Activated CD4-positive, alpha-beta memory T cell treated with anti-CD3 and anti-CD28 coated beads for 36 hours (primary cell): ENCODE measurements at regions of chr2 and their contacts with region 1.

Region 1: GRCh38 chr2:134163336-134163735 is 90.5 kb upstream of the MGAT5 start:
- DNase-seq: no peak
- H3K4me3 Mint-ChIP-seq: no peak overlapping the region
- H3K27ac Mint-ChIP-seq: no peak overlapping the region
- H3K4me1 Mint-ChIP-seq: peaks cover 78% of the 10 kb centered on the region
- H3K27me3 Mint-ChIP-seq: no peaks in the 10 kb centered on the region

Region 2: DNA sequence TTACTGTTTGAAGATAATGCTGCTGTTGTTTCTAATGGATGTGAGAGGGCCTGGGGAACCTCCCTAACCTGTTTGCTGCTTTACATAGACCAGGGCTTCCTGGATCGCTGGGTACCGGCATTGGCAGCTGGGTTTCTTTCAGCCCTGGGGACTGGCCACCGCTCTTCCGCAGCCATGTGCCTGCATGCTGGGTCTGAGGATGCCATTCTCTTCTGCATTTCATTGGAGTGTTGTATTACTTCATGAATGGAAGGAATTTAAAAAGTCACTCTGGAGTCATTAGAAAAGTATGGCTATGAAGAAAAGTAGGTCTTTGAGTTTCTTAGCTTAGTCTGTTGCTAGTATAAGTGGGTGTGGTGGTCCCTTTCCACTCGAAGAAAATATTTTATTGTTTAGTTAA is 16.7 kb before region 1 on chr2:
- CTCF ChIA-PET with region 1: interaction called, 3 read pairs
- POLR2A ChIA-PET with region 1: no interaction called
- intact Hi-C with region 1: loop called (anchors 2 kb)
- DNase-seq: no peak
- H3K4me3 Mint-ChIP-seq: no peak overlapping the region
- H3K27ac Mint-ChIP-seq: no peak overlapping the region
- H3K4me1 Mint-ChIP-seq: peaks cover 64% of the 10 kb centered on the region
- H3K27me3 Mint-ChIP-seq: no peaks in the 10 kb centered on the region

Region 3: DNA sequence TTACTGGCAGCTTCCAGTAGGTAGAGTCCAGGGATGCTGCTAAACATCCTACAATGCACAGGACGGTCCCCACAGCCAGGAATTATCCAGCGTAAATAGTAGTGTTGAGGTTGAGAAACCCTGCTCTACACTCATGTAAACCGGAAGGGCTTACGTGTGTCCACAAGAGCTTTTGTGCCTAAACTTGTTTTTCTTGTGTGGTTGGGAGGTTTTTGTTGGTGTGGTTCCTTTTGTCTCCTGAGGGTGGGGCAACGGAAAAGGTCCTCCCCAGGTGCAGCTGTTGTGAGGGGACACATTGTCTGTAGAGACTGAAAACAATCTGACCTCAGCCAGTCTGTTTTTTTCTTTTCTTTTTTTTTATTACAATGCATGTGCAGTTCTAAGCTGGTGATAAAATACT is 17.9 kb after region 1 on chr2:
- CTCF ChIA-PET with region 1: no interaction called
- POLR2A ChIA-PET with region 1: no interaction called
- intact Hi-C with region 1: no loop called
- DNase-seq: peak; percentile 51
- H3K4me3 Mint-ChIP-seq: no peak overlapping the region
- H3K27ac Mint-ChIP-seq: peak overlapping the region; percentile 47
- H3K4me1 Mint-ChIP-seq: peaks cover 87% of the 10 kb centered on the region
- H3K27me3 Mint-ChIP-seq: no peaks in the 10 kb centered on the region